Activated B cell treated with CpG ODN at 0.5 μM for 24 hours (primary cell): ENCODE measurements at regions of chr17 and their contacts with region 1.

Region 1: GRCh38 chr17:43367737-43368242 is 31.0 kb upstream of the ARL4D start:
- DNase-seq: no peak
- ATAC-seq: peak; percentile 45
- H3K4me3 Mint-ChIP-seq: peak overlapping the region; percentile 95
- H3K27ac Mint-ChIP-seq: peak overlapping the region; percentile 100
- H3K4me1 Mint-ChIP-seq: peaks cover 51% of the 10 kb centered on the region
- H3K27me3 Mint-ChIP-seq: no peaks in the 10 kb centered on the region
- CTCF ChIP-seq: no peak

Region 2: GRCh38 chr17:42832974-42833766 is 534.6 kb before region 1 on chr17 and contains the start of gene PSME3:
- CTCF ChIA-PET with region 1: no interaction called
- POLR2A ChIA-PET with region 1: interaction called, 11 read pairs
- intact Hi-C with region 1: no loop called
- DNase-seq: peak; percentile 84
- ATAC-seq: peak; percentile 91
- H3K4me3 Mint-ChIP-seq: peak within 1 kb of the TSS; percentile 97
- H3K27ac Mint-ChIP-seq: peak within 1 kb of the TSS; percentile 99
- H3K4me1 Mint-ChIP-seq: peaks cover 24% of the 10 kb centered on the region
- H3K27me3 Mint-ChIP-seq: no peaks in the 10 kb centered on the region
- CTCF ChIP-seq: no peak
- total RNA-seq, gene PSME3: 136 and 141 TPM in 2 replicates

Region 3: DNA sequence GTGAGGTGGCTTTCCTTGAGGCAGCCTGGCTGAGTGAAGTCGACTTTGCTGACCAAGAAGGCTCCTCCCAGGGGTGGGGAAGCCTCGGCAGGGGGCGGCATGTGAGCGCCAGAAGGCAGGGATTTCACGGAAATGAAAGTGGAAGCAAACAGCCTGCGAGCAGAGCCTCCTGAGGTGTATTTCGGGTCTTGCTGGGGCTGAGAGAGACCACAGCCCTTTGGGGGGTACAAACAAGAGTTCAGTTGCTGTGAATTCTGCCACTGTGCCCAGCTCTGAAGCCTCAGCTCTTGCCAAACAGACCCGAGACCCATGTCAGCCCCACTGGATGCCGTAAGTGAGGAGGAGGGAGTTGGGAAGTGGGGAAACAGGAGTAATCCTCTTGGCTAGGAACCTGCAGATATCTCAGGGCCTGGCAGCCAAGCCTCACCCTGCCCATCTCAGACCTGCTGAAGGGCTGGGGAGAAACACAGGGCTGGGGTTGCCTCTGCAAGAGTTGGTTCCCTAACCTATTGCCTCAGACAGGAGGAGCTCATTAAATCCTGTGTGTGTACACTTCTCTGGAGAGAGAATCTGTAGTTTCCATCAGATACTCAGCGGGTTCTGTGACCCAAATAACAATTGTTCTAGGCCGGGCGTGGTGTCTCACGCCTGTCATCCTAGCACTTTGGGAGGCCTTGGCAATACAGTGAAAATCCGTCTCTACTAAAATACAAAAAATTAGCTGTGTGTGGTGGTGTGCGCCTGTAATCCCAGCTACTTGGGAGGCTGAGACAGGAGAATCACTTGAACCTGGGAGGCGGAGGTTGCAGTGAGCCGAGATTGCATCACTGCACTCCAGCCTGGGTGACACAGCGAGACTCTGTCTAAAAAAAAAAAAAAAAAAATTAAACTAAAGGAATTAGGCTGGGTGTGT is 360.9 kb before region 1 on chr17 and contains the start of gene IFI35:
- CTCF ChIA-PET with region 1: no interaction called
- POLR2A ChIA-PET with region 1: interaction called, 14 read pairs
- intact Hi-C with region 1: no loop called
- DNase-seq: peak; percentile 75
- ATAC-seq: peak; percentile 99
- H3K4me3 Mint-ChIP-seq: peak within 1 kb of the TSS; percentile 99
- H3K27ac Mint-ChIP-seq: peak within 1 kb of the TSS; percentile 99
- H3K4me1 Mint-ChIP-seq: peaks cover 16% of the 10 kb centered on the region
- H3K27me3 Mint-ChIP-seq: no peaks in the 10 kb centered on the region
- CTCF ChIP-seq: no peak
- total RNA-seq, gene IFI35: 41.9 and 50.5 TPM in 2 replicates

Region 4: DNA sequence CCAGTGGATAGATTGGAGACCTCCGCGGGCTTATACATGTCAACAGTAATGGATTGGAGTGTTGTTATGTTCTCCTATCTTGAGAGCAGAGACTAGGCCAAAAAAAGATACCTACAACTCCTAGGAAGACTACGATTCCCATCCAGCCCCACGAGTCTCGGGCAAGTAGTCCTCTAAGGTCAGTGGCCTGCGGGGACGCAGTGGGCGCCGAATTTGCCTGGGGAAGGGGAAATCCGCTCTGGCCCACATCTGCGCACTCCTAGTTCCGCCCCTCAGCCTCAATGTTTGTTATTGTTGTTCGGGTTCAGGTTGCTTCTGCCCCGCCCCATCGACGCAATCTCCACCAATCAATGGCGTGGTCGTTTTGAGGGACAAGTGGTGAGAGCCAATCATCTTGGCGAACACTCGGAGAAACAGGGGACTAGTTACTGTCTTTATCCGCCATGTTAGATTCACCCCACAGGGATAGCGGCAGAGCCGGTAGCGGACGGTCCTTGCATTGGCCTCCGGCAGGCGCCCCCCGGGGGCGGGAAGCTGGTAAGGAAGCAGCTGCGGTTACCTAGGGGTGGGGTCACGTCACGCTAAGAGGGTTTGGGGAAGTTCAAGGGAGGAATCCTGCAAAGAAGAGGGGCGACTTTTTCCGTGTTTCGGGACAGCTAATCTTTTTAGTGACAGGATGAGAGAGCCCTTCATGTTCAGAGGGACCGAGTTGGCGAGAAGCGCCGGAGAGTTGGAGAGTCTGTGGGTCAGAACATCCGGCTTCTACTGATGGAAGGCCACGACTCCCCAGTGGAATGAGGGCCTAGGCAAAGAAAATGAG is 196.8 kb before region 1 on chr17 and contains the start of gene NBR1:
- CTCF ChIA-PET with region 1: no interaction called
- POLR2A ChIA-PET with region 1: interaction called, 17 read pairs
- intact Hi-C with region 1: no loop called
- DNase-seq: peak; percentile 86
- ATAC-seq: peak; percentile 74
- H3K4me3 Mint-ChIP-seq: no peak within 1 kb of the TSS
- H3K27ac Mint-ChIP-seq: no peak within 1 kb of the TSS
- H3K4me1 Mint-ChIP-seq: peaks cover 13% of the 10 kb centered on the region
- H3K27me3 Mint-ChIP-seq: no peaks in the 10 kb centered on the region
- CTCF ChIP-seq: no peak
- total RNA-seq, gene NBR1: 42.2 and 44.8 TPM in 2 replicates

Region 5: DNA sequence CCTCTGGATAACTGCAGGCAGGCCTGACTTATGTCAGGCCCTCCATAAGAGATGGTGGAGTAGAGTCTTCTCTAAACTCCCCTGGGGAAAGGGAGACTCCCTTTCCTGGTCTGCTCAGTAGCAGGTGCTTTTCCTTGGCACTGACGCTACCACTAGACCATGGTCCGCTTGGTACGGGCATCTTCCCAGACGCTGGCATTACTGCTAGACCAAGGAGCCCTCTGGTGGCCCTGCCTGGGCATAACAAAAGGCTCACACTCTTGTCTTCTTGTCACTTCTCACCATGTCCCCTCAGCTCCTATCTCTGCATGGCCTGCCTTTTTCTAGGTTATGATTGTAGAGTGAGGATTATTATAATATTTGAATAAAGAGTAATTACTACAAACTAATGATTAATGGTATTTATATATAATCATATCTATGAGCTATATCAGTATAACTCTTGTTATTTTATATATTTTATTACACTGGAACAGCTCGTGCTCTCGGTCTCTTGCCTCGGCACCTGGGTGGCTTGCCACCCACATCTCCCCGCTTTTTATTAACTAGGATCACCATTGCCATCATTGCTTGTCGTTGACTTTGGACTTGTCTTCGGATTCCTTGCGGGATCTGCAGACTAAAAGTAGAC is 28.8 kb before region 1 on chr17:
- CTCF ChIA-PET with region 1: interaction called, 4 read pairs
- POLR2A ChIA-PET with region 1: interaction called, 34 read pairs
- intact Hi-C with region 1: no loop called
- DNase-seq: peak; percentile 47
- ATAC-seq: no peak
- H3K4me3 Mint-ChIP-seq: no peak overlapping the region
- H3K27ac Mint-ChIP-seq: no peak overlapping the region
- H3K4me1 Mint-ChIP-seq: peaks cover 18% of the 10 kb centered on the region
- H3K27me3 Mint-ChIP-seq: no peaks in the 10 kb centered on the region
- CTCF ChIP-seq: peak; percentile 38

Region 6: GRCh38 chr17:43388359-43389045 is 20.7 kb after region 1 on chr17:
- CTCF ChIA-PET with region 1: interaction called, 16 read pairs
- POLR2A ChIA-PET with region 1: interaction called, 546 read pairs
- intact Hi-C with region 1: loop called (anchors 1 kb)
- DNase-seq: peak; percentile 94
- ATAC-seq: peak; percentile 76
- H3K4me3 Mint-ChIP-seq: peak overlapping the region; percentile 88
- H3K27ac Mint-ChIP-seq: peak overlapping the region; percentile 96
- H3K4me1 Mint-ChIP-seq: peaks cover 38% of the 10 kb centered on the region
- H3K27me3 Mint-ChIP-seq: no peaks in the 10 kb centered on the region
- CTCF ChIP-seq: no peak

Region 7: GRCh38 chr17:43524945-43525575 is 157.3 kb after region 1 on chr17:
- CTCF ChIA-PET with region 1: no interaction called
- POLR2A ChIA-PET with region 1: no interaction called
- intact Hi-C with region 1: no loop called
- DNase-seq: no peak
- ATAC-seq: no peak
- H3K4me3 Mint-ChIP-seq: no peak overlapping the region
- H3K27ac Mint-ChIP-seq: no peak overlapping the region
- H3K4me1 Mint-ChIP-seq: no peaks in the 10 kb centered on the region
- H3K27me3 Mint-ChIP-seq: no peaks in the 10 kb centered on the region
- CTCF ChIP-seq: no peak